Activated naive CD4-positive, alpha-beta T cell treated with anti-CD3 and anti-CD28 coated beads for 36 hours (primary cell): ENCODE measurements at regions of chr18 and their contacts with region 1.

Region 1: GRCh38 chr18:58180738-58181353 is 136.8 kb downstream of the NEDD4L start:
- DNase-seq: peak; percentile 83
- H3K4me3 Mint-ChIP-seq: no peak overlapping the region
- H3K27ac Mint-ChIP-seq: no peak overlapping the region
- H3K4me1 Mint-ChIP-seq: no peaks in the 10 kb centered on the region
- H3K27me3 Mint-ChIP-seq: no peaks in the 10 kb centered on the region

Region 2: DNA sequence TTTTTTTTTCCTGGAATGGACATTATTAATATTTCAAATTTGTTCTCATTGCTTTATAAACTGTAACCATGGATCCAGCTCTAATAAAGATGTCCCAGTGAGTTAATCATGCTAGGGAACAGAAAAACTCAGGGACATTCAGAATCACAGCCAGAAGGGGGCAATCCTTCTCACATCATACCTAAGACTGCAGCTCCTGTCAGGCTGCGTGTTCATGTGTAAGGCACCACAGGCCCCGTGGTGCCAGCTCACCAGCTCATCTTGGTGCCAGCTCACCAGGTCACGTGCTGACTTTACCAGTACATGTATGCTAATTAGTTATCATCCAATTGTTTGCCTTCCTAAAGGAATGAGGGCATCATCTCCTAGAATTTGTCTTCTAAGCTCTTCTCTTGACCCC is 221.6 kb before region 1 on chr18:
- CTCF ChIA-PET with region 1: interaction called, 14 read pairs
- intact Hi-C with region 1: no loop called
- DNase-seq: peak; percentile 18
- H3K4me3 Mint-ChIP-seq: no peak overlapping the region
- H3K27ac Mint-ChIP-seq: no peak overlapping the region
- H3K4me1 Mint-ChIP-seq: no peaks in the 10 kb centered on the region
- H3K27me3 Mint-ChIP-seq: peaks cover 9% of the 10 kb centered on the region

Region 3: GRCh38 chr18:58135701-58136331 is 45.0 kb before region 1 on chr18:
- CTCF ChIA-PET with region 1: interaction called, 4 read pairs
- intact Hi-C with region 1: loop called (anchors 2 kb)
- DNase-seq: peak; percentile 74
- H3K4me3 Mint-ChIP-seq: no peak overlapping the region
- H3K27ac Mint-ChIP-seq: no peak overlapping the region
- H3K4me1 Mint-ChIP-seq: peaks cover 7% of the 10 kb centered on the region
- H3K27me3 Mint-ChIP-seq: peaks cover 9% of the 10 kb centered on the region

Region 4: GRCh38 chr18:58195278-58195765 is 14.5 kb after region 1 on chr18:
- CTCF ChIA-PET with region 1: interaction called, 29 read pairs
- intact Hi-C with region 1: no loop called
- DNase-seq: peak; percentile 36
- H3K4me3 Mint-ChIP-seq: peak overlapping the region; percentile 80
- H3K27ac Mint-ChIP-seq: peak overlapping the region; percentile 12
- H3K4me1 Mint-ChIP-seq: peaks cover 16% of the 10 kb centered on the region
- H3K27me3 Mint-ChIP-seq: no peaks in the 10 kb centered on the region

Region 5: DNA sequence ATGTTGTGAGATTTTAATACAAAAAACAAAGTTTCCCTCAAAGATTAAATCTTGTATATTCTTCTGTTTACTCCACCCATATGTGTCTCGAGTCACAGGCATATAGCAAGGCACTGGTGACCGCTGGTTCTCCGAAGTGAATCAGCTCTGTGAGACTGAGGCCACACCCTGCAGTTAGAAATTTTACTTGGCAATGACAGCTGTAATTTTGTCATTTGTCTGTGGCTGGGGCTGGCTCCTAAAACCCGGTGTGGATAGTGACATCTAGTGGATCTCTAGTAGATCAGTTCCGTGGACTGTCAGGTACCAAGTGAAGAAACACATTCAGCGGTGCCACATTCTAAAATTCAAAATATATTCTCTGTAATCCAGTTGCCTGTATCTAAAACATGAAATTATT is 141.1 kb after region 1 on chr18:
- CTCF ChIA-PET with region 1: interaction called, 7 read pairs
- intact Hi-C with region 1: loop called (anchors 1 kb)
- DNase-seq: peak; percentile 80
- H3K4me3 Mint-ChIP-seq: no peak overlapping the region
- H3K27ac Mint-ChIP-seq: no peak overlapping the region
- H3K4me1 Mint-ChIP-seq: peaks cover 16% of the 10 kb centered on the region
- H3K27me3 Mint-ChIP-seq: no peaks in the 10 kb centered on the region